ENCODE measurements at regions of chr3 and their contacts with region 1.

Region 1: DNA sequence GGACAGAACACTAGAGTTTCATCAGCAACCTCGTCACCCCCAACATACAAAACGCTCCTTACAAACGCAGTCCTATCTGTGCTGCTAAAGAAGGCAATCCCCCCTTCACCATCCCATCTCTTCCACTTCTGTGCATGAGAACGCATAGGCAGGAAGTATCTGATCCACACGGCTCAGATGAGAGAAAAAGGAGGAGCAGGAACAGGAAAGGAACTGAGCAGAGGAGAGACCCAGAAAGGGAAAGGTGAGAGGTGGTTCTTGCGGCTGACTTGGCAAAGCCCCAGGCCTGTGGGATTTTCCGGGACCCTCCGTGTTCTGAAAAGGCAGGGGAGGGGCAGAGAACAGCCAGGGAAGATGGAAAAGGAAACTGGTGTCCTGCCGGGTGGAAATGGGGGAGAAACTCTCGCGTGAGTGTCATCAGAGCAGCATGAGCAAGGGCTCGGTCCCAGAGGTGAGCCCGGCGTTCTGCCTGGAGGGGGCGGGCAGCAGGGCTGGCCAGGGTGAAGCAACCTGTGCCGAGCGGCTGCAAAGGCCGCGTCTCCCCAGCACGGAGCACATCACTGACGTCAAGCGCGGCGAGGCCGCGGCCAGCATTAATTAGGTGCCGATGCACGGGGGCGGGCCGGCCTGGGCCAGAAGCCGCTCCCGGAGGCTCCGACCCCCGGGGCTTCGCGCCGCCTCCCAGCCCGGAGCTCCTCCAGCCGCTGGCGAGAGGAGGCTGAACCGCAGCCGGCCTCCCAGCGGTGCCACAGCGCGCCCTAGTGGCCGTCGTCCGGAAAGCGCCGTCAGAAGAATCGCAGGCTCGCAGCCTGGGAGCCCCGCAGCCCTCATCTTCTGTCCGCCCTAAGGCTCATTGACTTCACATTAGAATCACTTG is 35.8 kb downstream of the CPN2 start:
- DNase-seq: peak; percentile 85 to 89
- ATAC-seq: peak; percentile 84 to 92 (median 90)
- H3K4me3 ChIP-seq: peak overlapping the region in 9 of 10 donors; percentile 8 to 62 (median 52)
- H3K27ac ChIP-seq: peak overlapping the region in 6 of 10 donors; percentile 6 to 48 (median 34)
- H3K4me1 ChIP-seq: peaks cover 6 to 37% (median 25%) of the 10 kb centered on the region in 9 donors
- H3K27me3 ChIP-seq: peaks cover 0 to 67% (median 56%) of the 10 kb centered on the region in 7 donors
- CTCF ChIP-seq: peak; percentile 91 to 99 (median 97)

Region 2: GRCh38 chr3:193665370-193665989 is 649.8 kb before region 1 on chr3:
- intact Hi-C with region 1: loop called in 6 of 10 experiments (anchors 5 to 10 kb)
- DNase-seq: no peak
- ATAC-seq: no peak
- H3K4me3 ChIP-seq: no peak overlapping the region
- H3K27ac ChIP-seq: no peak overlapping the region
- H3K4me1 ChIP-seq: no peaks in the 10 kb centered on the region
- H3K27me3 ChIP-seq: no peaks in the 10 kb centered on the region
- CTCF ChIP-seq: peak; percentile 34 to 68 (median 54)

Region 3: DNA sequence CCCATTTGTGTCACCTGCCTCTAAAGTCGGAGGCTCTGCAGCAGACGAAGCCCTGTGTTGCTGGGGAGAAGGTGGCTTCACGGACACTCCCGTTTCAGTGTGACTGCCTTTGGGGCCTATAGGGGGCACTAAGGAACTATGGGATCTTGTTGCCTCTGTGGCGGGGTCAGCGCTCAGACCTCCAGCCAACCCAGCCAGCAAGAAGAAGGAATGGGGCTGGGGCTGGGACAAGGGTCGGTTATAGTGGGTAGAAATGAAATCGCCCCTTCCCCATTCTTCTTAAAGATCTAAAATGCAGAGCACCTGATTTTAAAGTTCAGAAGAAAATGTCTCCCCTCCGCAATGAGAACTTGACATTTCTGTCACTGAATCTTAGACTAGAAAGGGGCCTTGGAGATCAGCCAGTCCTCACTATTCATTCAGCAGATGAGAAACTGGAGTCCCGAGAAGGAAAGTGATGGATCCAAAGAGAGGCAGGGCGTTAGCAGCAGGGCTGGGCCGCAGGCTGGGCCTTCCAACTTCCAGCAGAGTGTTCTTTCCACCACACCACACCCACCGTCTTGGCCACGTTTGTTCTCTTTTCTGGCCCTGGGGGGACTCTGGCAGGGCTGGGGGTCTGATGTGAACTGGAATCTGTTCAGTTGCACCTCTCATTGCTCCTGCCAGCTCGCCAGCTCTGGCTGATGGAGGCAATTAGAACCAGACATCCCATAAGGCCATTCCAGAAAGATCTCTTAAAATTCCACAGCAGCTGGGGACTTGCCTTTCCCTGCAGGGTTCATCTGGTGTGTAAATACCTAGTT is 526.9 kb before region 1 on chr3:
- intact Hi-C with region 1: loop called in 8 of 10 experiments (anchors 2 to 5 kb)
- DNase-seq: peak; percentile 51 to 76
- ATAC-seq: peak; percentile 87 to 97 (median 95)
- H3K4me3 ChIP-seq: no peak overlapping the region
- H3K27ac ChIP-seq: peak overlapping the region in 4 of 10 donors; percentile 6 to 39 (median 16)
- H3K4me1 ChIP-seq: peaks cover 7 to 22% (median 12%) of the 10 kb centered on the region in 9 donors
- H3K27me3 ChIP-seq: peaks cover 3 to 61% (median 50%) of the 10 kb centered on the region in 7 donors
- CTCF ChIP-seq: peak; percentile 63 to 94 (median 84)

Region 4: GRCh38 chr3:194129581-194130133 is 185.7 kb before region 1 on chr3:
- intact Hi-C with region 1: loop called in 1 of 10 experiments (anchors 5 kb)
- DNase-seq: no peak
- ATAC-seq: no peak
- H3K4me3 ChIP-seq: no peak overlapping the region
- H3K27ac ChIP-seq: no peak overlapping the region
- H3K4me1 ChIP-seq: peaks cover 0 to 45% (median 30%) of the 10 kb centered on the region in 9 donors
- H3K27me3 ChIP-seq: peaks cover 0 to 60% (median 19%) of the 10 kb centered on the region in 7 donors
- CTCF ChIP-seq: no peak

Region 5: DNA sequence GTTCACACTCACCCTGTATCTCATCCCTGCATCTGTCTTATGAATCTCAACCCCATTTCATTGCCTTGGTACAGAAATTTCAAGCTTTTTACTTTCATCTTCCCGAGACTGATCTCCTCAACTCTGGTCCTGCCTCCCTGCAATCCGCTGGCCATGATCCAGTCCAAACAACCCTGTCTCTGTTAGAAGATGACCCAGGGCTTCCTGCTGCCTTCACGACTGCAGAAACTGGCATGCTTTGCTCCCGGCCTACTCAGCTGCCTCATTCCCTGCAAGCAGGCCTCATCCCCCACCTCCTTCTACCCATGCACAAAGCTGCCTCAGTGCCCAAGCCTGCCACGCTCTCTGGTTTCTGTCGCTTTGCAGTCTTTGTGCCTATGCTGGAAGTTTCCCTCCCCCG is 166.9 kb before region 1 on chr3:
- intact Hi-C with region 1: loop called in 2 of 10 experiments (anchors 5 kb)
- DNase-seq: no peak
- ATAC-seq: peak in 1 of 8 donors; percentile 25
- H3K4me3 ChIP-seq: no peak overlapping the region
- H3K27ac ChIP-seq: no peak overlapping the region
- H3K4me1 ChIP-seq: peaks cover 0 to 6% (median 2%) of the 10 kb centered on the region in 9 donors
- H3K27me3 ChIP-seq: peaks cover 0 to 16% (median 0%) of the 10 kb centered on the region in 7 donors
- CTCF ChIP-seq: no peak

Region 6: DNA sequence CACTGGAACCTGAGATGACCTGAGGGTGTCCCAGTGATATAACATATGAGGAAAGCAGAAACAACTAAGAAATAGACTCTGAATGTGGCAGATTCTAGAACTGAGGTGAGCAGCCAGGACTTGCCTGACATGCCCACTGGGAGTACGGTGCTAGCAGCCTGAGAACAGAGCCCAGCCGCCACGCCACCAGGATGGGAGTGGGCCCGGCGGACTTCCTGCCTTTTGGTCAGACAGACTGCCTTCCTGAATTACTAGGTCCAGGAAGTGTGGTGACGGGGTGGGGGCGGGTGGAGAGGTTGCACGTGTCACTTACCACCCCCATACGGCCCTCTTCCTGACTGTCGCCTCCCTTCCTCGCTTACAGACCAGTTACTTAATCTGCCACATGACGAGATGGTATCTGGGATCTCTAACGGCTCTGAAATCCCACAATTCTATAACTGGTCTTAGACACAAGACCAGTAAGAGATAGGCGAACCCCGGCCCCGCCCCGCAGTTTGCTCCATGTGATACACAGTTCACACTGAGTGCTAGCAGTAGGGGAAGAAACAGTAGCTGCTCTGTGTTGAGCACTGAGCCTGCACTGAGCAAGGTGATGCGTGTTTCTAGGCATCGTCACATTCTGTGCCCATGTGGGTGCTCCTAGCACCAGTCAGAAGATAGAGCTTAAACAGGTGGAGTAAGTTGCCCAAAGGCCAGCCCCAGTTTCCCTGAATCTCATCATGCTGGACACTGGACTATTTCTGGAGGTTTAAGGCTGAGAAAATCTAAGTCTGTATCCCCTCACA is 59.9 kb before region 1 on chr3:
- intact Hi-C with region 1: no loop called
- DNase-seq: peak; percentile 76 to 89
- ATAC-seq: peak; percentile 82 to 94 (median 86)
- H3K4me3 ChIP-seq: peak overlapping the region in 1 of 10 donors; percentile 30
- H3K27ac ChIP-seq: peak overlapping the region in 7 of 10 donors; percentile 27 to 83 (median 68)
- H3K4me1 ChIP-seq: peaks cover 6 to 39% (median 27%) of the 10 kb centered on the region in 9 donors
- H3K27me3 ChIP-seq: peaks cover 0 to 4% (median 0%) of the 10 kb centered on the region in 7 donors
- CTCF ChIP-seq: no peak

Region 7: GRCh38 chr3:194265483-194265892 is 49.8 kb before region 1 on chr3:
- intact Hi-C with region 1: loop called in 4 of 10 experiments (anchors 2 to 5 kb)
- DNase-seq: peak; percentile 92 to 94
- ATAC-seq: peak; percentile 78 to 88 (median 80)
- H3K4me3 ChIP-seq: peak overlapping the region in 2 of 10 donors; percentile 12 to 20
- H3K27ac ChIP-seq: peak overlapping the region in 9 of 10 donors; percentile 70 to 93 (median 85)
- H3K4me1 ChIP-seq: peaks cover 32 to 68% (median 60%) of the 10 kb centered on the region in 9 donors
- H3K27me3 ChIP-seq: no peaks in the 10 kb centered on the region
- CTCF ChIP-seq: no peak

Region 8: DNA sequence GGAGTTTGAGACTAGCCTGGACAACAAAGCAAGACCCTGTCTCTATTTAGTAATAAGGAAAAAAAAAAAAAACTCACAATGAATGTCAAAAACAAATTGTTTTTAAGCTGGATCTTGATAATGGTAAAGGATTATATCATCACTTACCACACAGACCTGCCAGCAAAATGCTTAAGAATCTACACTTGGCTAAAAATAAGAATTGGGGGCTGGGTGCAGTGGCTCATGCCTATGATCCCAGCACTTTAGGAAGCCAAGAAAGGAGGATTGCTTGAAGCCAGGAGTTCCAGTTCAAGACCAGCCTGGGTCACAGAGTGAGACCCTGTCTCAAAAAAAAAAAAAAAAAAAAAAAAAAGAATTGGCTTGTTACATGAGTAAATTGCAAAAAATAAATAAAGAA is 1096.5 kb after region 1 on chr3:
- intact Hi-C with region 1: no loop called
- DNase-seq: no peak
- ATAC-seq: no peak
- H3K4me3 ChIP-seq: no peak overlapping the region
- H3K27ac ChIP-seq: no peak overlapping the region
- H3K4me1 ChIP-seq: peaks cover 0 to 20% (median 0%) of the 10 kb centered on the region in 9 donors
- H3K27me3 ChIP-seq: no peaks in the 10 kb centered on the region
- CTCF ChIP-seq: no peak